ENCODE measurements at regions of chr3 and their contacts with region 1.

Region 1: GRCh38 chr3:183178629-183179549 is 16.4 kb upstream of the LAMP3 start:
- DNase-seq: peak in 7 of 9 donors; percentile 22 to 61 (median 31)
- ATAC-seq: peak; percentile 67
- H3K4me3 ChIP-seq: peak overlapping the region; percentile 46
- H3K4me3 Mint-ChIP-seq: peak overlapping the region; percentile 63 to 85 (median 78)
- H3K27ac ChIP-seq: no peak overlapping the region
- H3K27ac Mint-ChIP-seq: no peak overlapping the region
- H3K4me1 ChIP-seq: no peaks in the 10 kb centered on the region
- H3K4me1 Mint-ChIP-seq: peaks cover 5 to 15% (median 8%) of the 10 kb centered on the region in 7 donors
- H3K27me3 ChIP-seq: peaks cover 0 to 3% of the 10 kb centered on the region in 2 donors
- H3K27me3 Mint-ChIP-seq: peaks cover 28 to 55% (median 46%) of the 10 kb centered on the region in 5 donors

Region 2: DNA sequence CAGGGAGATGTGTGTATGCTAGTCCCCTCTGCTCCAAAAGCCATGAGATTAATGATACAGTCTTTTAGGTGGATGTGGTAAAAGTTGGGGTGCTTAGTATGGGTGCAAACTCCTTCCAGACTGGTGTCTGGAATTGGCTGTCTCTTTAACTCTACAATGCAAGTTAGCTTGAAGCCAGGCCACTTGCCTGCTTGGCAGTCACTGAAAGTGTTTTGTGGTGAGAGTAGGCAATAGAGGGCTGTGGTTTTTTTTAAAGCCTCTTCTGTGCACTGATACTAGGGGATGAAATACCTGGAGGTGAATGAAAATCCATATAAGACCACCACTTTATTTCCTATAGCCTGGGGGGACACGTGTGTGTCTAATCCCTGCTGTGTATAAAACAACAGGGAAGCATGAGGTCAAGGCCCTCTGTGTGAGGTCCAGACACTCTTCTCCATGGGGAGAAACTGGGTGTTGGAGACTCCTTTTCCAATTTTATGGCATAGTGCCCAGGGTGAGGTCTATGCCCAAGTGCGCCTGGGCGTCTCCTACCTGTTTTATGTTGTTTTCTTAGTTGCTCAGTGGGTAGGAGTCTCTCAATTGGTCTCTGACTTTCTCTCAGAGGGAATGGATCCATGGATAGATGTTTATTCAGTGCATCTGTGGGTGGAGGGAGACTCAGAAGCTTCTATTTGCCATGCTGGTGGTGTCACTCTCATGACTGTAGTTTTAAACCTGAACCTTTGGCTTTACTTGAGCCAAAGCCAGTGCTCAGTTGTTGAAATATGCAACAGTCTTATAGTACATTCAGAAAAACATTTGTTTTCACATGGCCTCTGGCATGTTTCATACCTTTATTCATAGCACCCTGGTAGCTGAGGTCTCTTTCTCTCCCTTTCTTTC is 713.3 kb before region 1 on chr3:
- CTCF ChIA-PET with region 1: no interaction called
- POLR2A ChIA-PET with region 1: no interaction called
- intact Hi-C with region 1: no loop called
- DNase-seq: no peak
- ATAC-seq: no peak
- H3K4me3 ChIP-seq: no peak overlapping the region
- H3K4me3 Mint-ChIP-seq: no peak overlapping the region
- H3K27ac ChIP-seq: no peak overlapping the region
- H3K27ac Mint-ChIP-seq: no peak overlapping the region
- H3K4me1 ChIP-seq: no peaks in the 10 kb centered on the region
- H3K4me1 Mint-ChIP-seq: no peaks in the 10 kb centered on the region
- H3K27me3 ChIP-seq: no peaks in the 10 kb centered on the region
- H3K27me3 Mint-ChIP-seq: peaks cover 0 to 8% (median 4%) of the 10 kb centered on the region in 5 donors

Region 3: GRCh38 chr3:183161552-183162336 is 17.1 kb before region 1 on chr3:
- CTCF ChIA-PET with region 1: no interaction called
- POLR2A ChIA-PET with region 1: interaction called, 4 read pairs
- intact Hi-C with region 1: loop called in 1 of 2 experiments (anchors 1 kb)
- DNase-seq: peak in 4 of 9 donors; percentile 12 to 18 (median 14)
- ATAC-seq: no peak
- H3K4me3 ChIP-seq: peak overlapping the region; percentile 92
- H3K4me3 Mint-ChIP-seq: peak overlapping the region; percentile 80 to 97 (median 90)
- H3K27ac ChIP-seq: peak overlapping the region; percentile 61
- H3K27ac Mint-ChIP-seq: peak overlapping the region; percentile 46 to 90 (median 76)
- H3K4me1 ChIP-seq: peaks cover 5% of the 10 kb centered on the region in 2 donors
- H3K4me1 Mint-ChIP-seq: peaks cover 8 to 33% (median 9%) of the 10 kb centered on the region in 7 donors
- H3K27me3 ChIP-seq: no peaks in the 10 kb centered on the region
- H3K27me3 Mint-ChIP-seq: peaks cover 0 to 3% (median 0%) of the 10 kb centered on the region in 5 donors

Region 4: GRCh38 chr3:183252973-183253901 is 74.3 kb after region 1 on chr3 and contains the start of gene B3GNT5:
- CTCF ChIA-PET with region 1: no interaction called
- POLR2A ChIA-PET with region 1: no interaction called
- intact Hi-C with region 1: loop called in 1 of 2 experiments (anchors 5 kb)
- DNase-seq: peak in 8 of 9 donors; percentile 3 to 60 (median 20)
- ATAC-seq: peak; percentile 77
- H3K4me3 ChIP-seq: peak within 1 kb of the TSS; percentile 73
- H3K4me3 Mint-ChIP-seq: peak within 1 kb of the TSS; percentile 73 to 86 (median 78)
- H3K27ac ChIP-seq: no peak within 1 kb of the TSS
- H3K27ac Mint-ChIP-seq: peak within 1 kb of the TSS in 2 of 9 donors; percentile 9 to 46
- H3K4me1 ChIP-seq: peaks cover 0 to 3% of the 10 kb centered on the region in 2 donors
- H3K4me1 Mint-ChIP-seq: peaks cover 0 to 14% (median 11%) of the 10 kb centered on the region in 7 donors
- H3K27me3 ChIP-seq: peaks cover 0 to 5% of the 10 kb centered on the region in 2 donors
- H3K27me3 Mint-ChIP-seq: peaks cover 18 to 54% (median 43%) of the 10 kb centered on the region in 5 donors
- total RNA-seq, gene B3GNT5: 0.22 to 13.1 (median 1.5) TPM

Region 5: DNA sequence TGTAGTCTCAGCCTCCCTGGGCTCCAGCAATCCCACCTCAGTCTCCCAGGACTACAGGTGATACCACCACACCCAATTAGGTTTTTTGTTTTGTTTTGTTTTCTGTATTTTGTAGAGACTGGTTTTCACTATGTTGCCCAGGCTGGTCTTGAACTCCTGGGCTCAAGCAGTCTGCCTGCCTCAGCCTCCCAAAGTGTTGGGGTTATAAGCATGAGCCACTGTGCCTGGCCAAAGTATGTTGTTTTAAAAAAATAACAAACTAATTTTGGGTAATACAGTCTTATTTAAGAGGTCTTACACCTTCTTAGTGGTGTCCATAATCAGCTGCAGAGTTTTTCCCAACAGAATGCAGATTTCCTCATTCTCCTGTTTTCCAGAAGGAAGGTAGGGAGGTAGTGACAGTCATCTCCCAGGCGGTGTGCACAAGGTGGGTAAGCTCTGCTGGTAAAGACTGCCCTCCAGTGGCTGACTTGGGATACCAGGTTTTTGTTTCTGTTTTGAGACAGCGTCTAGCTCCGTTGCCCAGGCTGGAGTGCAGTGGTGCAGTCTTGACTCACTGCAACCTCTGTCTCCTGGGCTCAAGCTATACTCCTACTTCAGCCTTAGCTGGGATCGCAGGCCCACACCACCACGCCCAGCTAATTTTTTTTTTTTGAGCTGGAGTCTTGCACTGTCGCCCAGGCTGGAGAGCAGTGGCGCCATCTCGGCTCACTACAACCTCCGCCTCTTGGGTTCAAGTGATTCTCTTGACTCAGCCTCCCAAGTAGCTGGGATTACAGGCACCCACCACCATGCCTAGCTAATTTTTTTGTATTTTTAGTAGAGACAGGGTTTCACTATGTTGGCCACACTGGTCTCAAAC is 588.1 kb after region 1 on chr3:
- CTCF ChIA-PET with region 1: interaction called, 3 read pairs
- POLR2A ChIA-PET with region 1: no interaction called
- intact Hi-C with region 1: loop called (anchors 1 kb)
- DNase-seq: peak; percentile 41 to 72 (median 65)
- ATAC-seq: peak; percentile 96
- H3K4me3 ChIP-seq: no peak overlapping the region
- H3K4me3 Mint-ChIP-seq: no peak overlapping the region
- H3K27ac ChIP-seq: no peak overlapping the region
- H3K27ac Mint-ChIP-seq: peak overlapping the region in 4 of 9 donors; percentile 3 to 73 (median 40)
- H3K4me1 ChIP-seq: no peaks in the 10 kb centered on the region
- H3K4me1 Mint-ChIP-seq: peaks cover 5 to 18% (median 12%) of the 10 kb centered on the region in 7 donors
- H3K27me3 ChIP-seq: no peaks in the 10 kb centered on the region
- H3K27me3 Mint-ChIP-seq: no peaks in the 10 kb centered on the region

Measured in naive thymus-derived CD4-positive, alpha-beta T cell (primary cell).